ENCODE measurements at regions of chr5 and their contacts with region 1.

Region 1: DNA sequence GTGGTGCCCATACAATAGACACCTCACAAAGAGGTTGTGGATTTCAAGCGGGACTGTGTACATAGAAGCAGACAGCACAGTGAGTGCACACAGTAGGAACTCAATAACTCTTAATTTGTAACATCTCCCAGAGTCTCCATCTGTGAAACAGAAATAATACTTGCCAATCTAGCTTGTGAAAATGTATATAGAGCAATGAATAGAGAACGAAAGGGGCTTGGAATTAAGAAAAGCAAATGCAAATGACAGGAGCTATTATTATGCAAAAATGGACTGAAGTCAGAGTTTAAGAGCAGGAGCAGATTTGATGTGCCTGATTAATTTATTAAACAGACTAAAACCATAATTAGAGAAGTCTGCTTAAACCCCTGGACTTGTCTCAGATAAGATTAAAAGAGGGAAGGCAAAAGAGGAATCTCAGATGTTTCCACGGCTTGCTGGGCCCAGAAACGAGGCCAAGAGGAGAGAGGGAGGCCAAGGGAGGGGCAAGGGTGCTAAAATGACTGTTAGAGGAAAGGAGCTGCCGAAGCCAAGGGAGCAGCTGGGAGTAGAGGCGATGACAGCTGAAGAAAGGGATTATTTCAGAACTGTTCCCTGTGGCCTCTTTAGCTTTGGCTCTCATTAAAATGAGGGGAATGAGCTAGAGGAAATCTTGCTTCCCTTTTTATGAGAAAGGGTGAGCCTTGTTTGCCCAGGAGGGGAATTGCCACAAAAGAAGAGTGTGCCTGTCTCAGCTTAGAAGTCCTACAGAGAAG is 72.1 kb downstream of the FEM1C start:
- DNase-seq: peak; percentile 33 to 63
- ATAC-seq: peak; percentile 80 to 87 (median 86)
- H3K4me3 ChIP-seq: no peak overlapping the region
- H3K27ac ChIP-seq: peak overlapping the region; percentile 78
- H3K4me1 ChIP-seq: peaks cover 24% of the 10 kb centered on the region
- H3K27me3 ChIP-seq: no peaks in the 10 kb centered on the region
- CTCF ChIP-seq: no peak

Region 2: DNA sequence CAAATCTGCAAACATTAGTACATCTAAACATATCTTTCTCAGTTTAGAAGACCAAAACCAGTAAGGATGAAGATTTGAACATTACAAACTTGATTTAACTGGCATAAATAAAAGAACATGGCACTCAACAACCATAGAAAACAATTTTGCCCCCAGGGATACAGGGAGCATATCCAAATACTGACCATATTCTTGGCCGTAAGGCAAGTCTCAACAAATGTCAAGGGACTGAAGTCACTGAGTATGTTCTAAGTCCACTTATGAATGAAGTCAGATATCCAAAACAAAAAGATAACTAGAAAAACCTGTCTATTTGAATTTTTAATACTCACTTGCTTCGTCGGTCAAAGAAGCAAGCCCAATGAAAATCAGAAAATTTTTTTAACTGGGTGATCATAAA is 58.0 kb after region 1 on chr5:
- intact Hi-C with region 1: loop called in 1 of 2 experiments (anchors 5 kb)
- DNase-seq: no peak
- ATAC-seq: peak in 3 of 4 donors; percentile 59 to 71 (median 64)
- H3K4me3 ChIP-seq: no peak overlapping the region
- H3K27ac ChIP-seq: no peak overlapping the region
- H3K4me1 ChIP-seq: peaks cover 65% of the 10 kb centered on the region
- H3K27me3 ChIP-seq: no peaks in the 10 kb centered on the region
- CTCF ChIP-seq: no peak

Region 3: DNA sequence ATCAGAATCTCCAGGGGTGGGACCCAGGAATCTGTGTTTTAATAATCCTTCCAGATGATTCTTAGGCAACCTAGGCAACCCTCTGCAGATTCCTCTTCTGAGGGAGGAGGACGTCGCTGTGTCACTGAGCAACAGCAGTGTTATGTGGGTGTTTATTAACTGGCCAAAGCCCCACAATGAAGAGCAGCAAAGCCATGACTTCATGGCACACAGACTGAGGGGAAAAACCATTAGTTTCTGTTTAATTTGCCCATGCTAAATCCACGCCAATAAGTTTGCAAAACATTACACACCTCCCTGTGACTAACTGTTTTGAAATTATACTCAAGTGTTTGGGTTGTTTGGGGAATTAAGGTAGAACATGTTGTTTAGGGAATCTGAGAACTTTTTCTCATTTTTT is 237.1 kb after region 1 on chr5:
- intact Hi-C with region 1: no loop called
- DNase-seq: peak in 1 of 2 donors; percentile 11
- ATAC-seq: peak in 1 of 4 donors; percentile 22
- H3K4me3 ChIP-seq: no peak overlapping the region
- H3K27ac ChIP-seq: no peak overlapping the region
- H3K4me1 ChIP-seq: no peaks in the 10 kb centered on the region
- H3K27me3 ChIP-seq: no peaks in the 10 kb centered on the region
- CTCF ChIP-seq: no peak

Region 4: DNA sequence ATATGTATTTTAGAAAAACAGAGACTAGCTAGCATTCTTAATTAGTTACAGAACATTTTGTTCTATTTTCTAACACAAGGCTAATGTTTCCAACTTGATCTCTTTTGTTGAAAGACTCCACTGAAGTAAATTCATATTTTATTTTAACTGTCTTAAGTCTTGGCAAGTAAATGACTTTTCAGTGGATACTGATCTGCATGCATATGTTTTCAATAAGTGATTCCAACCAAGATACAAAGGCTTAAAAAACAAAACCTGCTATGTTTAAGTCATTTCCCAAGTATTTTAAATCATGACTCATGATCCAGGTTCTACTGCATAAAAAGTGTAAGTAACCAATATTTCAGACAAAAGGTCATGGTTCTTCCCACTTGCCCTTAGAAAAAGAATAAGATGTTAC is 338.3 kb after region 1 on chr5:
- intact Hi-C with region 1: no loop called
- DNase-seq: no peak
- ATAC-seq: no peak
- H3K4me3 ChIP-seq: no peak overlapping the region
- H3K27ac ChIP-seq: no peak overlapping the region
- H3K4me1 ChIP-seq: no peaks in the 10 kb centered on the region
- H3K27me3 ChIP-seq: peaks cover 0 to 38% (median 5%) of the 10 kb centered on the region in 3 donors
- CTCF ChIP-seq: no peak

Measured in psoas muscle (tissue), 8 donors.